ENCODE measurements at regions of chr10 and their contacts with region 1.

Region 1: DNA sequence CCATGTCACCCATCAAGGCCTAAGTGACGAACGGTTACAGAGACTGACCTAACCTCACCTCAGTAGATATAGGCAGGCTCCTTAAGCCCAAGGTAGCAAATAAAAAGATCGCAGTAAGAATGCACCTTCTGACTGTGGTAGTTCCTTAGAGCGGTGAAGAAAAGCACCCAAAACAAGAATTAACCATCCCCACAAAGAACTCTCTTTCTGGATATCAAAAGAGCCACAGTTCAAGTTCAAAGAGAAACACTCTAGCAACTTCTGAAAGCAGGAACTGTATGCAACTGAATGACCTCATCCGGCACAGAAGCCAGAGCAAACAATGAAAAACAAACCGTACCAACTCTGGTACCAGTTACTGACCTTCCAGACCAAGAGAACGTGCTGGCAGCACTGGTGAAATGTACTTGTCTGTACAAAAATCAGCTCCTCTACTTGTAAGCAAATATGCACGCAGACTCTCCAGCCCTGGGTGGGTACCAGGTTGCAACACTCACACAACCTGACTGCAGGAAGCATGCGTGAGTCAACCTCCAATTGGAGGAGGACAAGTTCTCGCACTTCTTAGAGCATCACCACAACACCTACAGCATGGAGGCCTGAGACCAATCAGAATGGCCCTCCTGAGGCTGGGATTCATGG is 202.7 kb downstream of the FAM107B start:
- DNase-seq: peak; percentile 55
- H3K4me3 Mint-ChIP-seq: peak overlapping the region; percentile 82
- H3K27ac Mint-ChIP-seq: peak overlapping the region; percentile 97
- H3K4me1 Mint-ChIP-seq: peaks cover 86% of the 10 kb centered on the region
- H3K27me3 Mint-ChIP-seq: no peaks in the 10 kb centered on the region

Region 2: GRCh38 chr10:14282276-14282675 is 289.7 kb before region 1 on chr10:
- intact Hi-C with region 1: no loop called
- DNase-seq: no peak
- H3K4me3 Mint-ChIP-seq: no peak overlapping the region
- H3K27ac Mint-ChIP-seq: no peak overlapping the region
- H3K4me1 Mint-ChIP-seq: no peaks in the 10 kb centered on the region
- H3K27me3 Mint-ChIP-seq: peaks cover 10% of the 10 kb centered on the region

Region 3: GRCh38 chr10:14358886-14359573 is 213.0 kb before region 1 on chr10:
- intact Hi-C with region 1: no loop called
- DNase-seq: no peak
- H3K4me3 Mint-ChIP-seq: no peak overlapping the region
- H3K27ac Mint-ChIP-seq: no peak overlapping the region
- H3K4me1 Mint-ChIP-seq: no peaks in the 10 kb centered on the region
- H3K27me3 Mint-ChIP-seq: peaks cover 5% of the 10 kb centered on the region

Region 4: GRCh38 chr10:14560274-14560673 is 11.7 kb before region 1 on chr10:
- intact Hi-C with region 1: loop called (anchors 1 kb)
- DNase-seq: peak; percentile 59
- H3K4me3 Mint-ChIP-seq: peak overlapping the region; percentile 41
- H3K27ac Mint-ChIP-seq: peak overlapping the region; percentile 95
- H3K4me1 Mint-ChIP-seq: peaks cover 97% of the 10 kb centered on the region
- H3K27me3 Mint-ChIP-seq: no peaks in the 10 kb centered on the region

Region 5: GRCh38 chr10:14583252-14583651 is 11.3 kb after region 1 on chr10:
- intact Hi-C with region 1: loop called (anchors 1 kb)
- DNase-seq: peak; percentile 79
- H3K4me3 Mint-ChIP-seq: peak overlapping the region; percentile 48
- H3K27ac Mint-ChIP-seq: peak overlapping the region; percentile 89
- H3K4me1 Mint-ChIP-seq: peaks cover 86% of the 10 kb centered on the region
- H3K27me3 Mint-ChIP-seq: no peaks in the 10 kb centered on the region

Region 6: GRCh38 chr10:14659626-14660196 is 87.7 kb after region 1 on chr10:
- intact Hi-C with region 1: no loop called
- DNase-seq: peak; percentile 59
- H3K4me3 Mint-ChIP-seq: peak overlapping the region; percentile 46
- H3K27ac Mint-ChIP-seq: peak overlapping the region; percentile 92
- H3K4me1 Mint-ChIP-seq: peaks cover 81% of the 10 kb centered on the region
- H3K27me3 Mint-ChIP-seq: no peaks in the 10 kb centered on the region